ENCODE measurements at regions of chr9 and their contacts with region 1.

Region 1: DNA sequence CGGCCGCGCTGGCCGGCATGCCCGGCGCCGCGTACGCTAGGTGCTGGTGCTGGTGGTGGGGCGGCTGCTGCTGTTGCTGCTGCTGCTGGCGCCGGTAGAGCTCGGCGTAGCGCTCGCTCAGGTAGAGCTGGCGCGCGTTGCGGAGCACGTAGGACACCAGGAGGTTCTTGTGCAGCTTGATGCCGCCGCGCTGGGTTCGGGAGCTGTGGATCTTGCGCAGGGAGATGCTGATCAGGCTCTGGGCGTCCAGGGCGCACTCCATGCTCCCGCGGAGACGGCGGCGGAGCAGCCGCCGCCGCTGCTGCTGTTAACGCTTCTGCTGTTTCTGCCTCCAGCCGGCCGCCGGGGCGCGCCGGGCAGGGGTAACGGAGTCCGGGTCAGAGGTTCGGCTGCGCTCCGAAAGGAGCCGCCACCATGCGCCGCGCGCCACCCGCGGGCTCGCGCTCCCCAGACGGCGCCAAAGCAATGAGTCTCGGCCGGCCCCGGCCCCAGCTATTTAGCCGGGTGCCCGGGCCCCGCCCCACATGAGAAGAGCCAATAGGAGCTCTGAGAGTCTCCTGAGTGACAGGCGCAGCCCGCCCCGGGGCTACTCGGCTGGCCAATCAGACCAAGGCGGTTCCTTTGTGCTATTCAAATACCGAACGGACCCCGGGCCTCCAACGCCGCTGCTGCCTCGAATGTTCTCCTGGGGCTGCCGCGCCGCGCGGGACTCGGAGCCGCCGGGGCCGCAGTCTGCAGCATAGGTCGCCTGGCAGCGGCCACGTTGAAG is at the start of gene IER5L:
- DNase-seq: peak; percentile 95 to 99
- ATAC-seq: peak; percentile 49 to 76
- H3K4me3 ChIP-seq: peak within 1 kb of the TSS; percentile 87
- H3K27ac ChIP-seq: peak within 1 kb of the TSS; percentile 99
- H3K4me1 ChIP-seq: peaks cover 55% of the 10 kb centered on the region
- CTCF ChIP-seq: no peak; the same call in 2 of the 3 replicates
- EP300 ChIP-seq: no peak
- POLR2A ChIP-seq: peak; percentile 99
- RAD21 ChIP-seq: peak in 1 of 2 experiments; percentile 43; a peak in 2 of 5 replicates
- polyA plus RNA-seq, gene IER5L: 16.8 and 25.1 TPM in 2 replicates

Region 2: GRCh38 chr9:129191234-129191633 is 13.3 kb after region 1 on chr9:
- CTCF ChIA-PET with region 1: interaction called, 14 read pairs
- POLR2A ChIA-PET with region 1: interaction called, 22 read pairs
- DNase-seq: no peak
- ATAC-seq: no peak
- H3K4me3 ChIP-seq: no peak overlapping the region
- H3K27ac ChIP-seq: no peak overlapping the region
- H3K4me1 ChIP-seq: peaks cover under 1% of the 10 kb centered on the region; the same call in 1 of the 3 replicates
- CTCF ChIP-seq: no peak
- EP300 ChIP-seq: no peak
- POLR2A ChIP-seq: no peak
- RAD21 ChIP-seq: no peak

Region 3: GRCh38 chr9:129347316-129348120 is 169.5 kb after region 1 on chr9:
- CTCF ChIA-PET with region 1: interaction called, 17 read pairs
- POLR2A ChIA-PET with region 1: interaction called, 9 read pairs
- DNase-seq: peak; percentile 65 to 75
- ATAC-seq: peak; percentile 76 to 83
- H3K4me3 ChIP-seq: no peak overlapping the region
- H3K27ac ChIP-seq: peak overlapping the region; percentile 98 to 99
- H3K4me1 ChIP-seq: peaks cover 68% of the 10 kb centered on the region
- CTCF ChIP-seq: no peak
- EP300 ChIP-seq: peak; percentile 19 to 54; a peak in 2 of 5 replicates
- POLR2A ChIP-seq: no peak
- RAD21 ChIP-seq: peak in 1 of 2 experiments; percentile 36; a peak in 2 of 5 replicates

Region 4: GRCh38 chr9:129473523-129474229 is 295.7 kb after region 1 on chr9:
- CTCF ChIA-PET with region 1: interaction called, 13 read pairs
- POLR2A ChIA-PET with region 1: interaction called, 3 read pairs
- DNase-seq: no peak
- ATAC-seq: no peak
- H3K4me3 ChIP-seq: no peak overlapping the region
- H3K27ac ChIP-seq: peak overlapping the region; percentile 76 to 99; a peak in 5 of 6 replicates
- H3K4me1 ChIP-seq: peaks cover 57% of the 10 kb centered on the region
- CTCF ChIP-seq: no peak
- EP300 ChIP-seq: no peak
- POLR2A ChIP-seq: no peak
- RAD21 ChIP-seq: no peak

Region 5: DNA sequence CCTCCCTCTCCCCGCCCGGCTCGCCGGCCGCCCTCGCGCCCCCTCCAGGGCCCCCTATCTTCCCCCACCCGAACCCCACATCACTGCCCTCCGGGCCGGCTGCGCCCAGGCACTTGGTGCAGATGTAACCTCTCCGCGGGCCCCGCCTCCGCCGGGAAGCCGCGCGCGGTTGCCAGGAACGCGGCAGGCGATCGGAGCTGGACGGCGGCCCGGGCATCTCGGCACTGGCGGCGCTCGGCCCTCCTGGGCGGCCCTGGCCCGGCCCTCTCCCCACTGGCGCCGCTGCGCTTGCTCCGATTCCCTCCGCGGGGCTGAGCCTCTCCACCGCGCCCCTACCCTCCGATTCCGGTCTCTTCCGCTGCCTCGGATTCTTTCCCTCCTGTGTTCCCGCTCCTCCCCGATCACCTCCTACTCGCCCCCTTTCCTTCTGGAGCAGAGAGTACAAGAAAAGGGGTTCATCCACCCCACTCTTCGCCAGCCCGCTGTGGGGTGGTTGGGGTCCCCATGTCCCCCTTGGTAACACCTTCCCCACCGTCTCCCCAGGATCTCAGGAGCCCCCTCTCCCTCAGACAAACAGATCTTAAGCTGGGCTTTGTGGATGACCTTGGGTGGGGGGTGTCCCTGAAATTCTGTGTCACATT is 372.3 kb after region 1 on chr9:
- CTCF ChIA-PET with region 1: interaction called, 11 read pairs
- POLR2A ChIA-PET with region 1: interaction called, 3 read pairs
- DNase-seq: peak; percentile 28 to 55
- ATAC-seq: peak; percentile 74 to 82
- H3K4me3 ChIP-seq: peak overlapping the region; percentile 60
- H3K27ac ChIP-seq: peak overlapping the region; percentile 98
- H3K4me1 ChIP-seq: peaks cover 49% of the 10 kb centered on the region
- CTCF ChIP-seq: no peak
- EP300 ChIP-seq: no peak
- POLR2A ChIP-seq: peak; percentile 27; the same call in 1 of the 2 replicates
- RAD21 ChIP-seq: 0 out of 5 replicates have a peak, but pooled peaks of 1 of the 2 experiments have one; percentile 18

Region 6: DNA sequence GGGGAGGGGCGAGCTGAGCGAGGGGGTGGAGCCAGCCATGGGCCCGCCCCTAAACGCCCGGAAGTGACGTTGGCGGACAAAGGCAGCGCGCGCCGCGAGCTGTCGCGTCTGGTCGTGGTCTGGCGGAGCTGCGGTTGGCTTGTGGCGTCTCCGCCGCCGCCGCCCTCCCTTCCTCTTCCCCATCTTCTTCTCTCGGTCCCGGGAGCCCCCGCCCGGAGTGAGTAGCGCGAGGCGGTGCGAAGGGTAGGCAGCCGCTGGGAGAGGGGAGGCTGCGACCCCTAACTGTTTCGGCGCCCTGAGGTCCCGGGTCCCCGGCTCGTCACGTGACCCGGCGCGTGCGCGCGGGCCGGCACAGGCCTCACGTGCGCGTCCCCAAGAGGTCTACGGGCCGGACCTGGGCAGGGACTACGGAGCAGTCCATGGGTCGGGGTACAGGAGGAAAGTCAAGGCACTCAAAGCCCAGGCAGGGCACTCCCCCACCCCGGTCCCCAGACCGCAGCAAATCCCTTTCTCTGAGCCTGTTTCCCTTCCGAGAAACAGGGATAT is 448.2 kb after region 1 on chr9 and contains the start of gene NTMT1:
- CTCF ChIA-PET with region 1: interaction called, 57 read pairs
- POLR2A ChIA-PET with region 1: interaction called, 21 read pairs
- DNase-seq: peak; percentile 77 to 87
- ATAC-seq: peak; percentile 78 to 84
- H3K4me3 ChIP-seq: peak within 1 kb of the TSS; percentile 69
- H3K27ac ChIP-seq: peak within 1 kb of the TSS; percentile 78 to 98
- H3K4me1 ChIP-seq: peaks cover 28% of the 10 kb centered on the region
- CTCF ChIP-seq: no peak
- EP300 ChIP-seq: no peak
- POLR2A ChIP-seq: peak; percentile 93
- RAD21 ChIP-seq: no peak
- polyA plus RNA-seq, gene NTMT1: 39.2 and 49.4 TPM in 2 replicates